ENCODE measurements at regions of chr5 and their contacts with region 1.

Region 1: DNA sequence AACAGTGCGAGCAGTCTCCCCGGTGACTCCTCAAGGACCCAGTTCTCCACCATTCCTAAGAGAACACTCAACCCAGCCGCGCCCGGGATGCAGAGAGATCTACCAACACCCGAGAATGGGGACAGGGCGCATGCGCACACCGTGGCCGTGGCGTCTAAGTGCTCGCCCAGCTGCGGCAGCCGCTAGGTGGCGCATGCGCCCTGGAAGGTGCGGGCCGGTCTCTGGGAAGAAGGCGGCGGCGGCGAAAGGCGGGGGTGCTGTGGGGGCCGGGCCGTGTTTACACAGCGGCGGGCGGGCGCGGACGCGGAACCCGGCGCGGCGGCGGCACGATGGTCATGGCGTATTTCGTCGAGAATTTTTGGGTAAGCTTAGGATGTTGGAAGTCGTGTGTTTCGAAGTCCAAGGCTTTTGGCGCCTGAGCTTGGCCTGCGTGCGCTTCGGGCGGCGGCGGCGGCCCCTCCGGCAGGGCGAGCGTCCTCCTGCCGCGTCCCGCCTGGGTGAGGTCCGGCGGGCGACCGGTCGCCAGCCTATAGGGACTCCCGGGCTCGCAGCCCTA is at the start of gene FCHO2:
- DNase-seq: peak; percentile 96
- ATAC-seq: peak; percentile 96
- H3K4me3 Mint-ChIP-seq: peak within 1 kb of the TSS; percentile 92
- H3K27ac Mint-ChIP-seq: peak within 1 kb of the TSS; percentile 76
- H3K4me1 Mint-ChIP-seq: peaks cover 14% of the 10 kb centered on the region
- H3K27me3 Mint-ChIP-seq: peaks cover 22% of the 10 kb centered on the region
- CTCF ChIP-seq: no peak
- total RNA-seq, gene FCHO2: 3.2 and 5.3 TPM in 2 replicates

Region 2: GRCh38 chr5:71455427-71456361 is 1500.2 kb before region 1 on chr5 and contains the start of gene BDP1:
- CTCF ChIA-PET with region 1: no interaction called
- POLR2A ChIA-PET with region 1: no interaction called
- intact Hi-C with region 1: loop called (anchors 5 kb)
- DNase-seq: peak; percentile 96
- ATAC-seq: peak; percentile 84
- H3K4me3 Mint-ChIP-seq: peak within 1 kb of the TSS; percentile 97
- H3K27ac Mint-ChIP-seq: peak within 1 kb of the TSS; percentile 97
- H3K4me1 Mint-ChIP-seq: peaks cover 23% of the 10 kb centered on the region
- H3K27me3 Mint-ChIP-seq: peaks cover 7% of the 10 kb centered on the region
- CTCF ChIP-seq: no peak
- total RNA-seq, gene BDP1: 46.2 and 50.4 TPM in 2 replicates

Region 3: DNA sequence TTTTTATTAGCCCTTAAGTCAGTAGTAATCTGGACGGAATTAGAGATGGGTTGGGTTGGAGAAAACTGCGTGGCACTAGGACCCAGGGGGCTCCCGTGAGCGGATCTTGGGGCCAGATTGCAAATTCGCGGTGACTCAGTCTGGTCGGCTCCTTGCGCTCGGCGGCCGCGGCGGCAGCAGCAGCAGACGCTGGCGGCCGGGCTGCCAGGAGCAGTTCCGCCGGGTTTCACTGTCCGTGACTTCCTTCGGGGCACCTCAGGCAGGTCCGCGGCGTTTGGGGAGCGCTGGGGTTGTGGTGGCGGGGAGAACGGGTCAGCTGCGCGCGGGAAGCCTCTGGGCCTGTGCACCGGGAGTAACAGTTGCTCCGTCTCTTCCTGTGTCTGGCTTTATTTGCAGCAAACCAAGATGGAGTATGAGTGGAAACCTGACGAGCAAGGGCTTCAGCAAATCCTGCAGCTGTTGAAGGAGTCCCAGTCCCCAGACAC is 107.8 kb before region 1 on chr5:
- CTCF ChIA-PET with region 1: no interaction called
- POLR2A ChIA-PET with region 1: interaction called, 4 read pairs
- intact Hi-C with region 1: loop called (anchors 2 kb)
- DNase-seq: peak; percentile 82
- ATAC-seq: peak; percentile 73
- H3K4me3 Mint-ChIP-seq: peak overlapping the region; percentile 96
- H3K27ac Mint-ChIP-seq: peak overlapping the region; percentile 96
- H3K4me1 Mint-ChIP-seq: peaks cover 56% of the 10 kb centered on the region
- H3K27me3 Mint-ChIP-seq: no peaks in the 10 kb centered on the region
- CTCF ChIP-seq: no peak

Region 4: GRCh38 chr5:72895758-72896157 is 60.1 kb before region 1 on chr5:
- CTCF ChIA-PET with region 1: no interaction called
- POLR2A ChIA-PET with region 1: no interaction called
- intact Hi-C with region 1: no loop called
- DNase-seq: no peak
- ATAC-seq: no peak
- H3K4me3 Mint-ChIP-seq: no peak overlapping the region
- H3K27ac Mint-ChIP-seq: no peak overlapping the region
- H3K4me1 Mint-ChIP-seq: no peaks in the 10 kb centered on the region
- H3K27me3 Mint-ChIP-seq: no peaks in the 10 kb centered on the region
- CTCF ChIP-seq: no peak

Region 5: GRCh38 chr5:73448463-73449136 is 492.8 kb after region 1 on chr5 and contains the start of gene FOXD1:
- CTCF ChIA-PET with region 1: no interaction called
- POLR2A ChIA-PET with region 1: no interaction called
- intact Hi-C with region 1: loop called (anchors 5 kb)
- DNase-seq: peak; percentile 54
- ATAC-seq: peak; percentile 61
- H3K4me3 Mint-ChIP-seq: peak within 1 kb of the TSS; percentile 88
- H3K27ac Mint-ChIP-seq: peak within 1 kb of the TSS; percentile 50
- H3K4me1 Mint-ChIP-seq: peaks cover 16% of the 10 kb centered on the region
- H3K27me3 Mint-ChIP-seq: peaks cover 63% of the 10 kb centered on the region
- CTCF ChIP-seq: no peak
- total RNA-seq, gene FOXD1: 0.09 and 0.10 TPM in 2 replicates

Region 6: DNA sequence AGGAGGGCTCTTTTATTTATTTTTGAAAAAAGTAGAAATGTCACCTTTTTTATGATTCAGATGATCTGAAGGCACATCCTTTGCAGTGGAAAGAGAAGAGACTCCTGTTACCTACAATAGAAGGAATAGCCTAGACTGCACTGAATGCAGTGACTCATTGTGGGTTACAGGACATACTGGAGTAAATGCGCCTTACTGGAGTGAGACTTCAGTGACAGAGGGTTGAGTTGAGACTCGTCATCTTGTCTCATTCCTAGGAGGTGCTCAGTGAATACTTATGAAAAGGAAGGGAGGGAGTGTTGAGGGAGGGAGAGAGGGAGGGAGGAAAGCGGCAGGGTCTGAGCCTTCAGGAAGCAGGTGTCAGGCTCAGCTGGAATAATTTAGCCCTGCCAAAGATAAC is 584.3 kb after region 1 on chr5:
- CTCF ChIA-PET with region 1: no interaction called
- POLR2A ChIA-PET with region 1: no interaction called
- intact Hi-C with region 1: loop called (anchors 1 kb)
- DNase-seq: no peak
- ATAC-seq: no peak
- H3K4me3 Mint-ChIP-seq: no peak overlapping the region
- H3K27ac Mint-ChIP-seq: no peak overlapping the region
- H3K4me1 Mint-ChIP-seq: no peaks in the 10 kb centered on the region
- H3K27me3 Mint-ChIP-seq: peaks cover 14% of the 10 kb centered on the region
- CTCF ChIP-seq: no peak

Measured in activated B cell treated with CpG ODN at 0.5 μM for 24 hours (primary cell).